Right ventricle myocardium superior (tissue), 1 donor: ENCODE measurements at regions of chr15 and their contacts with region 1.

Region 1: GRCh38 chr15:73908030-73908821 is 18.0 kb upstream of the LOXL1 start:
- DNase-seq: peak; percentile 93
- ATAC-seq: peak; percentile 97

Region 2: GRCh38 chr15:73712088-73712487 is 196.1 kb before region 1 on chr15:
- intact Hi-C with region 1: loop called (anchors 5 kb)
- DNase-seq: no peak
- ATAC-seq: no peak

Region 3: DNA sequence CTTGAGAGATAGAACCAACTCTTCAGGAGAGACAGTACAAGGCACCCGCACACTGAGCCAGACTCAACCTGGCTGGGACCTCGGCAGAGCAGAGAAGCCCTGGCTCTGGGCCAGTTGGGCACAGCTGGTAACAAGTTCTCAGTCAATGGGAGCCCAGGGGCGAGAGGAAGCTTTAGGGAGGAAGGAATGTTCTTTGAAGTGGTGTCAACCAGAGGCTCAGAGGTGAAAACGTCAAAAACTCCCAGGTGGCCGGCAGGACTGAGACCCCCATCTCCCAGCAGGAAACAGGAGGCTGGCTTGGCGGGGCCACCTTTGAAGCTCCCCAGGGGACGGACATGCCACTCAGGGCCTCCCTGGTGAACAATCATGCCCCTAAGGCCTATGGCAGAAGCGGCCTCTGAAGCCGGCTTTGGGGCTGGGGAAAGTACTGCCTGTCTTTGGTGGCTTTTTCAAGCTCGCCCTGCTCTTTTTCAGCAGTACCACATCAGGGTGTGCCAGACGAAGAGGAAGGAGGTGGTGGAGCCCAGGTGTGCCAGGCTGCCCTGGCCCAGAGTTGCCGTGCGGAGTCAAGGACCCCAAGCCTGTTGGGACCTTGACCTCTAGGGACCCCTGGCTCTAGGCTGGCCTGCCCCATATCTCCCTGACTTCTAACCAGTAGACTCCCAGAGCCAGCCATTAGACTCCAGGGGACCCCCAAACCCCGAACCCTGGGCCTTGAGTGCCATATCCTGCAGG is 51.6 kb before region 1 on chr15:
- intact Hi-C with region 1: no loop called
- DNase-seq: peak; percentile 75
- ATAC-seq: peak; percentile 85